Upper lobe of right lung (tissue), 1 donor: ENCODE measurements at regions of chr21 and their contacts with region 1.

Region 1: GRCh38 chr21:41816220-41817165 is 49.6 kb upstream of the RIPK4 start:
- DNase-seq: peak; percentile 84
- ATAC-seq: peak; percentile 88
- H3K4me3 ChIP-seq: no peak overlapping the region
- H3K27ac ChIP-seq: no peak overlapping the region
- H3K4me1 ChIP-seq: peaks cover 4% of the 10 kb centered on the region
- H3K27me3 ChIP-seq: no peaks in the 10 kb centered on the region
- CTCF ChIP-seq: peak; percentile 82

Region 2: DNA sequence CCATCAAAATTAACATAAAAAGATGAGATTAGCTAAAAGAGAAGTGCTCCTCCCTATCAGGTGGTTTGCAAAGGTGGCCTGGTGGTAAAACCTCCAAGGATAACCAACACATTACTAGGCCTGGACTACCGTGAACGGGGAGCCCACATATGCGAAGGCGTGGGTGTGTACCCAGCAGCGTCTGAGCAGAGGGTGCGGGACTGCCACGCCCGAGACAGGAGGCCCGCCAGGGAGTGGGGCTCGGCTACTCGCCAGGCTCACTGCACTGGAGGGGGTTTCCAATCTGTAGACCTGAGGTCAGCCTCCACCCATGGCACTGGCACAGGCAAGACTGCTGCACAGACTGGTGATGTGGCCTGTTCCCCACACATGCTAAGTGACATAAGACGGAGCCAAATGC is 73.2 kb before region 1 on chr21:
- intact Hi-C with region 1: no loop called
- DNase-seq: no peak
- ATAC-seq: no peak
- H3K4me3 ChIP-seq: no peak overlapping the region
- H3K27ac ChIP-seq: no peak overlapping the region
- H3K4me1 ChIP-seq: no peaks in the 10 kb centered on the region
- H3K27me3 ChIP-seq: no peaks in the 10 kb centered on the region
- CTCF ChIP-seq: no peak

Region 3: DNA sequence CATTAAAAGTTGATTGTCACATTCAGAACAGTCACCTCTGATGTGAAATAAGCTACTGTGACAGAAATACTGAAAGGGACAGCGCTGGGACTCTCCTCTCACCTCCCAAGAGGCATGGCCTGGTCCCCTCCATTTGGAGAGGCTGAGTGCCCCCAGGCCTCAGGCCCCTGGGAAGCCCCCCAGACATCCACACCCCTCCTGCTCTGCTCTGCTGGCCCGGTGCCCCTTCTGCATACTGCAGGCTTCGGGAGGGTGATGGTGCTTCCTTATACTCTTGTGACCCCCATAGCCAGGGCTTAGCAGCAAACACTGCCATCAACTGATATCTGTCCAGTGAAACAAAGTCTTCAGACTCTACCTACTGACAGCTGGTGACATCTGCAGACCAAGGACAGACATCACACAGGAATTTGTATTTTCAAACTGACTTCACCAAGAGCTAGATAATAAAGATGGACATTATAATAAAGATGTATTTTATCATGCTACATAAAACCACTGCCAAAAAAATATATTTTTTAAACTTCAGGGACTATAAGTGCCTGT is 100.5 kb after region 1 on chr21:
- intact Hi-C with region 1: no loop called
- DNase-seq: no peak
- ATAC-seq: no peak
- H3K4me3 ChIP-seq: no peak overlapping the region
- H3K27ac ChIP-seq: no peak overlapping the region
- H3K4me1 ChIP-seq: no peaks in the 10 kb centered on the region
- H3K27me3 ChIP-seq: no peaks in the 10 kb centered on the region
- CTCF ChIP-seq: no peak

Region 4: GRCh38 chr21:42107881-42108553 is 291.5 kb after region 1 on chr21:
- intact Hi-C with region 1: loop called (anchors 10 kb)
- DNase-seq: peak; percentile 88
- ATAC-seq: peak; percentile 95
- H3K4me3 ChIP-seq: peak overlapping the region; percentile 1
- H3K27ac ChIP-seq: no peak overlapping the region
- H3K4me1 ChIP-seq: peaks cover 9% of the 10 kb centered on the region
- H3K27me3 ChIP-seq: no peaks in the 10 kb centered on the region
- CTCF ChIP-seq: peak; percentile 80

Region 5: GRCh38 chr21:42120087-42120821 is 303.8 kb after region 1 on chr21:
- intact Hi-C with region 1: loop called (anchors 5 kb)
- DNase-seq: no peak
- ATAC-seq: no peak
- H3K4me3 ChIP-seq: no peak overlapping the region
- H3K27ac ChIP-seq: no peak overlapping the region
- H3K4me1 ChIP-seq: peaks cover 2% of the 10 kb centered on the region
- H3K27me3 ChIP-seq: peaks cover 45% of the 10 kb centered on the region
- CTCF ChIP-seq: no peak